GM12878 (cell line): ENCODE measurements at regions of chr16 and their contacts with region 1.

Region 1: DNA sequence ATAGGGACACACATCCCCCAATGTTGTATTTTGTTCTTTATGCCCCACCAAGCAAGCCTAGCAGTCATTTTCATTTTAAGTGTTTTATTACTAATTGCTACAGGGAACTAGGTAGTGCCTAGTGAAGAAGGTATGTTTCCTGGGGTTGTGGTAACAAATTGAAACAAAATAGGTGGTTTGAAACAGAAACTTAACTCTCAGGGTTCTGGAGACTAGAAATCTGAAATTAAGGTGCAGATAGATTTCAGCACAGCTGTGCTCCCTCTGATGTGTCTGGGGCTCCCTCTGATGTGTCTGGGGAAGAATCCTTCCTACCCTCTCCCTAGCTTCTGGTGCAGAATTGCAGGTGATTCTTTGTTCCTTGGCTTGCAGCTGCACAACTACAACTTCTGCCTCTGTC is 390.1 kb downstream of the ZFHX3 start:
- DNase-seq: peak; percentile 82
- ATAC-seq: peak; percentile 91
- H3K4me3 ChIP-seq: peak overlapping the region; percentile 7; the same call in 1 of the 2 replicates
- H3K27ac ChIP-seq: peak overlapping the region; percentile 58; the same call in 1 of the 2 replicates
- H3K4me1 ChIP-seq: peaks cover 24% of the 10 kb centered on the region
- H3K27me3 ChIP-seq: no peaks in the 10 kb centered on the region
- CTCF ChIP-seq: peak in 2 of 3 experiments; percentile 19 to 40; a peak in 2 of 6 replicates
- EP300 ChIP-seq: no peak
- POLR2A ChIP-seq: no peak
- RAD21 ChIP-seq: peak; percentile 51

Region 2: DNA sequence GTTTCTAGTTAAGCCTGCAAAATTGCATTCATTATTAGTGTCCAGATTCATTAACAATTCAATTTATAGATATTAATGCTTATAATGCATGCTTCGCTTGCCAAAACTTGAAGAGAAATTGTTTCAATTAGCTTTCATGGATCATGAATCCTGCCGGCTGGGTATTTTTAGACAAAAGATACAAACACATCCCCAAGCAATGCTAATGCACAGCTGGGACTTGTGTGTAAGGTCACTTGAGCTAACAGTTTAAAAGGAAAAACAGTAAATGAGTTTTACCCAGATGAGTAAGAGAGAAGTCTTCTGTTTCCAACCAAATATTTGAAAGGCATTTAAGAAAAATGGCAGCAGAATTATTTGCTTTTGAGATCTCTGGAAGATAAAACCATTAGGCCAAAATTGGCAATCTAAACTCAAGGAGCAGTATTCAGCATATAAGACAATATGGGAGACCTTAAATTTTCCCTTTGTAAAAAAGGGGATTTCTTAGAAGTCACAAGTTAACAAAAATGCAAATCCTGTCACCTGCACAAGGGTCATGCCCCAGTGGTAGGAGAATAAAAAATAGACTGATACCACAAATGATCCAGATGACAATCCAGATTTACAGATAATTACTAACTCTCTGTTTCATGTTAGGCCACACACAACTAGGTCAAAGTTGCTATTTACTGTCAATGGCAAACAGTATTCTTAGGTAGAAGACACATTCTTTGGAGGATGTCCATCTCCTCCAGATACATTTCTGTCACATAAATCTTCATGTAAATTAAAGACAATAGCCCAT is 67.4 kb before region 1 on chr16:
- CTCF ChIA-PET with region 1: no interaction called
- POLR2A ChIA-PET with region 1: interaction called, 3 read pairs
- RAD21 ChIA-PET with region 1: interaction called, 7 read pairs
- SMC1A ChIA-PET with region 1: interaction called, 6 read pairs
- in situ Hi-C with region 1: no loop called
- intact Hi-C with region 1: loop called (anchors 5 kb)
- DNase-seq: peak; percentile 66
- ATAC-seq: peak; percentile 92
- H3K4me3 ChIP-seq: no peak overlapping the region
- H3K27ac ChIP-seq: peak overlapping the region; percentile 74
- H3K4me1 ChIP-seq: peaks cover 26% of the 10 kb centered on the region
- H3K27me3 ChIP-seq: no peaks in the 10 kb centered on the region
- CTCF ChIP-seq: no peak
- EP300 ChIP-seq: peak; percentile 76 to 93; a peak in 3 of 4 replicates
- POLR2A ChIP-seq: no peak
- RAD21 ChIP-seq: no peak